Activated CD4-positive, alpha-beta T cell treated with anti-CD3 and anti-CD28 coated beads, Interleukin-2, amount 10 ng/mL, durations not matched to agents 24 days and 14 days (primary cell): ENCODE measurements at regions of chr13 and their contacts with region 1.

Region 1: GRCh38 chr13:51452361-51453206 is at the start of gene INTS6:
- DNase-seq: peak; percentile 100
- H3K4me3 Mint-ChIP-seq: peak within 1 kb of the TSS; percentile 92
- H3K27ac Mint-ChIP-seq: peak within 1 kb of the TSS; percentile 97
- H3K4me1 Mint-ChIP-seq: peaks cover 31% of the 10 kb centered on the region
- H3K27me3 Mint-ChIP-seq: no peaks in the 10 kb centered on the region
- total RNA-seq, gene INTS6: 63.5 and 68.6 TPM in 2 replicates

Region 2: GRCh38 chr13:49792550-49793324 is 1659.8 kb before region 1 on chr13 and contains the start of gene KPNA3:
- intact Hi-C with region 1: loop called (anchors 2 kb)
- DNase-seq: peak; percentile 98
- H3K4me3 Mint-ChIP-seq: peak within 1 kb of the TSS; percentile 93
- H3K27ac Mint-ChIP-seq: peak within 1 kb of the TSS; percentile 99
- H3K4me1 Mint-ChIP-seq: peaks cover 30% of the 10 kb centered on the region
- H3K27me3 Mint-ChIP-seq: no peaks in the 10 kb centered on the region
- total RNA-seq, gene KPNA3: 56.5 and 58.8 TPM in 2 replicates

Region 3: GRCh38 chr13:51405176-51405575 is 47.4 kb before region 1 on chr13:
- intact Hi-C with region 1: no loop called
- DNase-seq: no peak
- H3K4me3 Mint-ChIP-seq: no peak overlapping the region
- H3K27ac Mint-ChIP-seq: no peak overlapping the region
- H3K4me1 Mint-ChIP-seq: peaks cover 25% of the 10 kb centered on the region
- H3K27me3 Mint-ChIP-seq: no peaks in the 10 kb centered on the region

Region 4: DNA sequence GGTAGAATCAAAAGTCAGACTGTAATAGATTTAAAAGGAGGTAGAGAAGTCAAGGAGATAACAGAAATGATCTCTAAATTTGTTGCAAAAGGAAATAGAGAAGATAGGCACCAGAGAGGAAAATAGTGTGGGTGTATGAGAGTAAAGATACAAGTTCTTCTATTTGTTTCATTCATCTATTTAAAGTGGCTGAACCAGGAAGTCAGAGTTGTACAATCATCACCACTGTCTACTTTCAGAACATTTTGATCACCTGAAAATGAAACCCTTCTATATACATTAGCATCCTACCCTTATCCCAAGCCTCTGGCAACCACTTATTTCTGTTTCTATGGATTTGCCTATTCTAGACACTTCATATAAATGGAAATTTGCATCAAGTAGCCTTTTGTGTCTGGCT is 36.5 kb before region 1 on chr13:
- intact Hi-C with region 1: loop called (anchors 1 kb)
- DNase-seq: no peak
- H3K4me3 Mint-ChIP-seq: peak overlapping the region; percentile 1
- H3K27ac Mint-ChIP-seq: peak overlapping the region; percentile 58
- H3K4me1 Mint-ChIP-seq: peaks cover 51% of the 10 kb centered on the region
- H3K27me3 Mint-ChIP-seq: no peaks in the 10 kb centered on the region

Region 5: DNA sequence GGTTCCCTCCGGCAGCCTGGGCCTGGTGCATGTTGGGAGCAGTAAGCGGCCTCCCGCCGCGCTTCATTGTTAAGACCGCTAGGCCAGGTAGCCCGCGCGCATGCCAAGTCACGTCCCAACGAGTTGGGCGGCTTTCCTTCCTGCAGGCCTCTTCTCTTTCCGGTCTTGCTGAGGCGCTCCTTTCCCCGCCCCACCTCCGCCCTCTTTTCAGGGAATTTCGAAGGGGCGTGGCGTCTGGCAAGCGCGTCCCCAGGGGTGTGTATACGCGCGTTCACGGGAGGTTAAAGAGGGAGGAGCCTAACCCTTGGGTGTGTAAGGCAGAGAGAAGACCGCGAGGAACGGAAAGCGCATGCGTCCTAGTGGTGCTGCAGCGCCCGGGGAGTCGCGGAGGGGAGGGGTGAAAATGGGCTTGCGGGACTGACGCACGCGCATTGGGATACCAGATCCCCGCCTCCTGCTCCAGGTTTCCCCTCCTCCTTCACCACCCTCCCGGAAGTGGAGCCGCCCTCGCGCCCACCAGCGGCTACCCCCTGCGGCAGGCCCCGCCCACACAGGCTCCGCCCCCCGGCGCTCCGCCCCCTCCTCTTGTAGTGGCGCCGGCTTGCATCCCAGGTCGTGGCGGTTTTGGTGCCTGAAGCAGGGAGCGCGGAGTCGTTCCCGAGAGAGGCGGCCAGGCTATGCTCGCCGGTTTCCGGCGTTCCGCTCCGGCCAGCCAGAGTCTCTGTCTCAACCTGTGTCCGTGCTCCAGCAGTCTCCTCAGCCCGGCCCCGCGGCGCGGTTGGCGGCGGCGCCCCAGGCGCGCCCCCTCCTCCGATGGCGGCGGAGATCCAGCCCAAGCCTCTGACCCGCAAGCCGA is 131.5 kb after region 1 on chr13 and contains the start of gene WDFY2:
- intact Hi-C with region 1: loop called (anchors 1 kb)
- DNase-seq: peak; percentile 100
- H3K4me3 Mint-ChIP-seq: peak within 1 kb of the TSS; percentile 90
- H3K27ac Mint-ChIP-seq: peak within 1 kb of the TSS; percentile 97
- H3K4me1 Mint-ChIP-seq: peaks cover 37% of the 10 kb centered on the region
- H3K27me3 Mint-ChIP-seq: peaks cover 6% of the 10 kb centered on the region
- total RNA-seq, gene WDFY2: 9.1 and 11.1 TPM in 2 replicates

Region 6: DNA sequence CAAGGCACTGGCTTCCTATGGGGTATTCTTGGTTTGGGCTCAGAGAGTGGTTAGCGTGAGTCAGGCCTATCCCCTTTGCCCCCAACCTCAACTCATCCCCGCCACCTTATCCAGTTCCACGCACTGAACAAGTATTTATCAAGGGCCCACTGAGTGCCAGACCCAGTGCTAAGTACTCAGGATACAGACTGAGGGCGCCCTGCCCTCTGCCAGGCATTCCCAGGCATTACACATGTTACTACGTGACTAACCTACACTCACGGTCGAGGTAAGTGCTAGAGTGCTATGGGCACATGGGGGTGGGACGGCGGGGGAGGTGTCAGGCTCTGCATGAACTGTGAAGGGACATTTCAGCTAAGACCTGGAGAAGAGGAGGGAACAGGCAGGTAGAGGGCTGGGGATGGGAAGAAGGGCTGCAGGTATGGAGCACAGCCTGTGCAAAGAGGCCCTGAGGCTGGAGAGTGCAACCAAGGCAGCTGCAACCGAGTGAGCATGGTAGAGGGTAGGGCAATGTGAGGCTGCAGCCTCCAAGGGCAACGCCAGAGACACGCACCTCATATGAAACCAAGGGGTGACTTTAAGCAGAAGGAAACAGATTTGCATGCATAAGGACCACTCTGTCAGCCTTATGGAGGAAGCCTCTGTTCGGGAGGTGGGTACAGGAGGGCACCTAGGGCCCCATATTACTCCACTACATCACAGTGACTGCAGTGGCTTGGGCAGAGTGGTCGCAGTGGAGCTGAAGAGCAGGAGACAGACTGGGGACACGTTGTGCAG is 328.9 kb after region 1 on chr13:
- intact Hi-C with region 1: loop called (anchors 5 kb)
- DNase-seq: peak; percentile 70
- H3K4me3 Mint-ChIP-seq: no peak overlapping the region
- H3K27ac Mint-ChIP-seq: no peak overlapping the region
- H3K4me1 Mint-ChIP-seq: peaks cover 7% of the 10 kb centered on the region
- H3K27me3 Mint-ChIP-seq: no peaks in the 10 kb centered on the region

Region 7: DNA sequence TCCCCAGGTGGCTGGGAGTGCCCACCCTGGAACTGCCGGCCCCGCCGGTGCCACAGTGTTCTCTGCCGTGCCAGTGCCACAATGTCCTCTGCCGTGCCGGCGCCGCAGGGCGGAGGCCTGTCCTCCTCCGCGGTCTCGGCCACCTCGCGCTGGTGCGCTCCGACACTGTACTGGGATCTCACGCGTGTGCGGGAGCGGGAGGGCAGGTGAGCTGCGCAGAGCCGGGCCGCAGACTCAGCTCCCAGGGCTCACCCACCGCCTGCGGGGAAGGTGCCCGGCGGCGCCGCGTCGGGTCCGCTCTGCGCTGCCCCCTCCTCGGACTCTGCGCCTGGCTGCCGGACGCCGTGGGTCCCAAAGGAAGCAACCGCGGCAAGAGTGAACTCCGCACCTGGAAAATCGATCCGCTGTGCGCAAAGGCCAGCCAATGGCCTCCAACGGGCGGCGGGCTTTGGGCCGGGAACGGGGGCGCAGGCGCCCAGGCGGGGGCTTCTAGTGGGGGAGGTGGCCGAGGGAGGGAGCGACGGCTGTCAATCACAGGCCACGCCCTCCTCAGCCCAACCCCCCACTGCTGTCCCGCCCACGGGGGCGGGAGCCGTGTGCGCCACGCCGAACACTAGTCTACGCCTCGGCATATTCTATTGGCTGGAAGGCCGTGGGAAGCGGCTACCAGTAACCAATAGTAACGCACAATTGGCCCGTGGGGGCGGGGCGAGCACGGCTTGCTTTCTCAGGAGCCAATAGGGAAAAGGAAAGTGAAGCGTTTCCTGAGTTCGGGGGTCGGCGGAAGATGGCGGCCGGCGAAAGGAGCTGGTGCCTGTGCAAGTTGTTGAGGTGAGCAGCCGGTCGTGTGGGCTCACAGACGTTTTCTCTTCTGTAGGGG is 559.3 kb after region 1 on chr13 and contains the start of gene ALG11:
- intact Hi-C with region 1: loop called (anchors 2 kb)
- DNase-seq: peak; percentile 100
- H3K4me3 Mint-ChIP-seq: peak within 1 kb of the TSS; percentile 99
- H3K27ac Mint-ChIP-seq: peak within 1 kb of the TSS; percentile 93
- H3K4me1 Mint-ChIP-seq: peaks cover 8% of the 10 kb centered on the region
- H3K27me3 Mint-ChIP-seq: peaks cover 34% of the 10 kb centered on the region
- total RNA-seq, gene ALG11: 26.7 and 28.0 TPM in 2 replicates